ENCODE measurements at regions of chr3 and their contacts with region 1.

Region 1: GRCh38 chr3:156040041-156040440 is 80.3 kb upstream of the KCNAB1 start:
- DNase-seq: no peak
- H3K4me3 ChIP-seq: no peak overlapping the region
- H3K27ac ChIP-seq: no peak overlapping the region
- H3K4me1 ChIP-seq: peaks cover 0 to 13% (median 4%) of the 10 kb centered on the region in 4 donors
- H3K27me3 ChIP-seq: no peaks in the 10 kb centered on the region
- CTCF ChIP-seq: no peak

Region 2: DNA sequence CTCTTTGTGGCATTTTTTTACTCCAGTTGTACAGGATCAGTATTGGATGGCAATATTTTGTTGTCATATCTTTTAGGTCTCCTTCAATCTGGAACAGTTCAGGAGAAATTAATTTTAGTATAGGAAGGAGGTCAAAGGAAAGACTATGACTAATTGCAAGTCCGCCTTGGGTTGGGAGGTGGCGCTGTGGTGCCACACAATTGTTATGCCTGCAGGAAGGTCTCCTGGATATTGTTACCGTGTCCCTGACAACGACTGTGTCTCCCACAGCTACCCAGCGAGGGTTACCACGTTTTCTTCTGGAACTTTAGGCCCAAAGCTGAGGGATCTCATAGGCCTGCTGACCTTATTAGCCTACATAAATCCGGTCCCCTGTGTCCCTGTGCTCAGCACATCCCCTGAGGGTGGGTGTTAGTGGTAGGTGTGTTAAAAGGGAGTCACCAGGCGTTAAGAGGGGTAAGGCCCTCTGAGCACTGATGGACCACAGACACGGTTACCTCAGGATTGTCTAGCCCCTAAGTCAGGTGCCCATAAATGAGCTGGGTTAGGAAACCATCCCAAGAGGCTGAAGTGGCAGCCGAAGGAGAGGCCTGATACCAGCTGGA is 111.9 kb after region 1 on chr3:
- intact Hi-C with region 1: loop called (anchors 10 kb)
- DNase-seq: peak; percentile 59 to 81
- H3K4me3 ChIP-seq: peak overlapping the region; percentile 3 to 5
- H3K27ac ChIP-seq: peak overlapping the region; percentile 70 to 73
- H3K4me1 ChIP-seq: peaks cover 0 to 97% (median 46%) of the 10 kb centered on the region in 4 donors
- H3K27me3 ChIP-seq: no peaks in the 10 kb centered on the region
- CTCF ChIP-seq: peak; percentile 73 to 77

Region 3: GRCh38 chr3:156509189-156510174 is 469.4 kb after region 1 on chr3:
- intact Hi-C with region 1: loop called (anchors 5 kb)
- DNase-seq: no peak
- H3K4me3 ChIP-seq: no peak overlapping the region
- H3K27ac ChIP-seq: no peak overlapping the region
- H3K4me1 ChIP-seq: peaks cover 0 to 7% (median 0%) of the 10 kb centered on the region in 4 donors
- H3K27me3 ChIP-seq: no peaks in the 10 kb centered on the region
- CTCF ChIP-seq: peak; percentile 61 to 66